MCF 10A (cell line): ENCODE measurements at regions of chr22 and their contacts with region 1.

Region 1: GRCh38 chr22:19854778-19855503 is at the starts of genes GNB1L and RTL10:
- DNase-seq: peak; percentile 96
- H3K4me3 Mint-ChIP-seq: peak within 1 kb of the TSS; percentile 86
- H3K27ac Mint-ChIP-seq: peak within 1 kb of the TSS; percentile 86
- H3K4me1 Mint-ChIP-seq: peaks cover 21% of the 10 kb centered on the region
- H3K27me3 Mint-ChIP-seq: no peaks in the 10 kb centered on the region
- CTCF ChIP-seq: no peak
- total RNA-seq, gene GNB1L: 4.3 and 7.1 TPM in 2 replicates
- total RNA-seq, gene RTL10: 16.8 and 20.6 TPM in 2 replicates

Region 2: GRCh38 chr22:19607192-19608002 is 247.5 kb before region 1 on chr22:
- CTCF ChIA-PET with region 1: no interaction called
- POLR2A ChIA-PET with region 1: no interaction called
- intact Hi-C with region 1: no loop called
- DNase-seq: peak; percentile 71
- H3K4me3 Mint-ChIP-seq: no peak overlapping the region
- H3K27ac Mint-ChIP-seq: peak overlapping the region; percentile 51
- H3K4me1 Mint-ChIP-seq: peaks cover 13% of the 10 kb centered on the region
- H3K27me3 Mint-ChIP-seq: no peaks in the 10 kb centered on the region
- CTCF ChIP-seq: no peak

Region 3: GRCh38 chr22:19824197-19825015 is 30.5 kb before region 1 on chr22:
- CTCF ChIA-PET with region 1: interaction called, 3 read pairs
- POLR2A ChIA-PET with region 1: interaction called, 24 read pairs
- intact Hi-C with region 1: no loop called
- DNase-seq: peak; percentile 74
- H3K4me3 Mint-ChIP-seq: no peak overlapping the region
- H3K27ac Mint-ChIP-seq: peak overlapping the region; percentile 29
- H3K4me1 Mint-ChIP-seq: peaks cover 23% of the 10 kb centered on the region
- H3K27me3 Mint-ChIP-seq: no peaks in the 10 kb centered on the region
- CTCF ChIP-seq: no peak

Region 4: GRCh38 chr22:19868773-19869471 is 14.0 kb after region 1 on chr22:
- CTCF ChIA-PET with region 1: no interaction called
- POLR2A ChIA-PET with region 1: interaction called, 32 read pairs
- intact Hi-C with region 1: no loop called
- DNase-seq: no peak
- H3K4me3 Mint-ChIP-seq: no peak overlapping the region
- H3K27ac Mint-ChIP-seq: peak overlapping the region; percentile 78
- H3K4me1 Mint-ChIP-seq: peaks cover 12% of the 10 kb centered on the region
- H3K27me3 Mint-ChIP-seq: no peaks in the 10 kb centered on the region
- CTCF ChIP-seq: no peak

Region 5: DNA sequence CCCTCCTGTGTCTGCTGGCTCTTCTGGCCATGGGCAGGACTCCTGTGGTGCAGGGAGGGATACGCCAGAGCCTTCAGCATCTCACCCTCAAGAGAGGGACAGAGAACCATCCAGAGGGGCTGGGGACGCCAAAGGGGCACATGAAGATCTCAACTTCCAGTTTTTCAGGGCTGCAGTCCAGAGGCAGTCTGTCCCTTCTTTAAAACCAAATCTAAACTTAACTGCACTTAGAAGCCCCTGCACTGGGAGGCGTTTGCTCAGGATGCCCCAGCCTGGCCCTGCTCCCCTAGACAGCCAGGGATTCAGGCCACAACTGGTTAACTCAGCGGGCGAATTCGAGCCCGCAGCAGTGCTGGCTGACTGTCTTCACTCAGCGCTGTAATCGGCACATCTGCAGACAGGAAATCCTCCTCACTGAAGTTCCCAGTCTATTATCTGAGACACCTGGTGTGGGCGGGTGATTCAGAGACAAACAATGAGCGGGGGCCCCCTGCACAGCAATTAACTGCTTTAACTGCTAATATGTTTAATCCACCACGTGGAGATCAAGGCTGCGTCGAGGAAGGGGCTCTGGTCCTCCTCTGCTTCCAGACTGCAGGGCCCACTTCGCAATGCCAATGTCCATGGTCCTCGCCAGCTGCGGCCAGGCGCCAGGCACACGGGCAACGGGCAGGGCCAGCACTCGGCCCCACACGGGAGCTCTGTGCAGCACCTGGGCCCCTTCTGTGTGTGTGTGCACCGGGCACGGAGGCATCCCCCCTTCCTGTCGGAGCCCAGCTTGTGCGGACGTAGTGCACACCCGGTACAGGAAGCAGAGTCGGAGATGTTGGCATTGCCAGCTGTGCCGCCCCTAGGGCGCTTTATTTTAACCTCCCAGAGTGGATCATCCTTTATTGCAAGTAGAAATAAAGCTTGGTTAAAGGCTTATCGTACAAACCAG is 36.6 kb after region 1 on chr22:
- CTCF ChIA-PET with region 1: interaction called, 4 read pairs
- POLR2A ChIA-PET with region 1: interaction called, 10 read pairs
- intact Hi-C with region 1: loop called (anchors 1 kb)
- DNase-seq: peak; percentile 84
- H3K4me3 Mint-ChIP-seq: no peak overlapping the region
- H3K27ac Mint-ChIP-seq: peak overlapping the region; percentile 70
- H3K4me1 Mint-ChIP-seq: peaks cover 23% of the 10 kb centered on the region
- H3K27me3 Mint-ChIP-seq: no peaks in the 10 kb centered on the region
- CTCF ChIP-seq: no peak

Region 6: DNA sequence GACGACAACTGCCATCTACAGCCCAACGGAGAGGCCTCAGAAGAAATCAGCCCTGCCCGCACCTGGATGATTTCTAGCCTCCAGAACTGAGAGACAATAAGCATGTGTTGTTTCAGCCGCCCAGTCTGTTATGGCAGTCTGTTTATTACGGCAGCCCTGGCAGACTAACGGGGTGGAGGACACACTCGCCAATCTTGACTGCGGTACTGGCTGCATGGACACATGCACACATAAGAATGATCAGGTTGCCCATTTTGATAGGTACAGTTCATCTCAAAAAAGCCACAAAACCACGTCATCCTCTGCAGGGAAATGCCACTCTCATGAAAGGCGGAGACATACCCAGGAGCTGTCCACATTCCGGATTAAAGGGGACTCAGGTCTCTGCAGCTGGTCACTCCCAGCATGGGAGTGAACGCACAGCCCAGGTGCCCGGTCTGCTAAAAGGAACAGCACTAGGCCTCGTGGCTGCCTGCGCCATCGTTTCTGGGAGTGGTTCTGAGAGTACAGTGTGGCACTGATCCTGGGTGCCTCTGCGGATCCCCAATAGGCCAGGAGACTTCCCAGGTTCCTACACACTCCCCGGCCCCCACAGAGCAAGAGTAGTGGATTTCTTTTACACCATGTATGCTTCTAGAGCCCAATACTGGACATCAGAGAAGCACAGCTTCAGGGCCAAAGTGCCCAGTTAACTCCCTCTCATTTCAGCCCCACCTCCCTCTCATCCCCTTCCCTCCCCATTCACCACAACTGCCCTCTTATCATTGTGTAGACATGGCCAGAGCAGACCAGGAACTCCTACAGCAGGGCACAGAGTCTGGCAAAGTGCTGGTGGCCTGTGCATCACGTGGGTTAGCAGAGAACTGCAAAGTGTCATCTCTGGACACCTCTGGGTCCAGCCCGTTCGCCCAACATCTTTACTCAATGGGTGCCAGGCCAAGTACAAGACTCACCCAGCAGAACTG is 74.9 kb after region 1 on chr22:
- CTCF ChIA-PET with region 1: no interaction called
- POLR2A ChIA-PET with region 1: no interaction called
- intact Hi-C with region 1: no loop called
- DNase-seq: no peak
- H3K4me3 Mint-ChIP-seq: no peak overlapping the region
- H3K27ac Mint-ChIP-seq: no peak overlapping the region
- H3K4me1 Mint-ChIP-seq: no peaks in the 10 kb centered on the region
- H3K27me3 Mint-ChIP-seq: no peaks in the 10 kb centered on the region
- CTCF ChIP-seq: no peak